ENCODE measurements at regions of chr1 and their contacts with region 1.

Region 1: DNA sequence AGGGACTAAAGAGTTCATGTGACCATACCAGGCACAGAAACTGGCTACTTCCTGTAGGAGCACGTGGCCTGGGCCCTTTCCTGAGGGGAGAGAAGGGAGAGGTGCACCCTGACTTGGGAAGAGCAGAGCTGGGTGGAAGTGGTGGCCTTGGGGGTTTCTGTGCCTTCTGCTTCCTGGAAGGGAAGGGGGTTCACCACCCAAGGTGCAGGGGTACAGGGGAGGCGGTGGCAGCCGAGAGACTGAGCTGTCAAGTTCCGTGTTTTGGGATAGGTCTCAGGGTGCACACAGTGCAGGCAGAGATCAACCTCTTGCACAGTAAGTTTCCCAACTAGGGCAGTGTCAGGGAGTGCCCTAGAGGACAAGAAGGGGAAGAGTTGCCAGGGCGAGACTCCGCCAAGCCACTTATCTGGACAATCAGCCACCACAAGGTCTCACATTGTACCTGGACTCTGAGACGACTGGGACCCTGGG is 10.1 kb downstream of the HECTD3 start:
- DNase-seq: no peak
- ATAC-seq: peak in 7 of 8 donors; percentile 20 to 69 (median 37)
- H3K4me3 ChIP-seq: no peak overlapping the region
- H3K27ac ChIP-seq: peak overlapping the region in 1 of 10 donors; percentile 46
- H3K4me1 ChIP-seq: peaks cover 0 to 12% (median 0%) of the 10 kb centered on the region in 9 donors
- H3K27me3 ChIP-seq: no peaks in the 10 kb centered on the region
- CTCF ChIP-seq: no peak

Region 2: GRCh38 chr1:44848456-44849181 is 152.4 kb before region 1 on chr1:
- intact Hi-C with region 1: loop called in 1 of 10 experiments (anchors 5 kb)
- DNase-seq: no peak
- ATAC-seq: peak in 3 of 8 donors; percentile 19 to 40 (median 34)
- H3K4me3 ChIP-seq: no peak overlapping the region
- H3K27ac ChIP-seq: peak overlapping the region in 4 of 10 donors; percentile 33 to 63 (median 42)
- H3K4me1 ChIP-seq: peaks cover 0 to 25% (median 9%) of the 10 kb centered on the region in 9 donors
- H3K27me3 ChIP-seq: peaks cover 0 to 4% (median 0%) of the 10 kb centered on the region in 7 donors
- CTCF ChIP-seq: no peak